ENCODE measurements at regions of chr17 and their contacts with region 1.

Region 1: DNA sequence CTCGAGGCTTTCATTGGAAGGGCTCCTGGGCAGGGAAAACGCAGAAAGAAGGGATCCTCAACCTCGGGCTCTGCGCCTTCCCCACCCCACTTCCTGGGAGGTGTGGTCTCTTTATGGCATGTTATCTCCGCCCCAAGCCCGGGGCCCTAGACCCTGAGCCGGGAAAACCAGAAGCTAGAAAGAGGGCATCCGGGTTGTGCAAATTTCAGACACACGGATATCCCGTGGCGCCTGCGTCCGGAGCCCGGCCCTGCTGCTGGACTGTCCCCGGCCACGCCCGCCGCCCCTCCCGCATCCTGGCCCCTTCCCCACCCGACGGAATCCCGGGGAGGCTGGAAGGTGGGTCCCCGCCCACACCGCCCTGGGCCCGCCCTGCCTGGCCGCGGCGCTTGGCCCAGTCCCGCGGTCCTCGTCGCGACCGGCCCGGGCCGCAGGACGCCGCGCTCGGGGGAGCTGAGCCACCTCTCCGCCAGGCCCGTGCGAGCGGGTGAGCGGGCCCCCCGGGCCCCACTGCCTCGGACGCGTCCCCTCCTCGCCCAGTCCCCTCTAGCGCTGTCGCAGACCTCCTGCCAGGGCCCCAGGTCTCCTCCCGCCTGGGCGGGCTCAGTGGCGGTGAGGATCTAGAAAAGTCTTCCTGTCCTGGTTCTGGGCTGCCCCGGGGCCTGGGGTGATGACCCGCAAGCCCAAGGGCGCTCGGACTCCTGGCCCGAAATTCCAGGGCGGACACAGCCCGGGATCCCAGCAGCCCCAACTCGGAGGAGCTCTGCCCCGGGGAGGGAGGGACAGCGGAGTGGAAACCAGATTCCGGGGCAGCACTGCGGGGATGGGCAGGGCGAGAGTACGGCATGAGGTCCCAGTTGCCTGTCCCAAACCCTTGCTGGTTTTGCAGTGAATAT is at the start of gene SLC16A5:
- DNase-seq: peak; percentile 75 to 95
- H3K4me3 ChIP-seq: peak within 1 kb of the TSS; percentile 73 to 82 (median 77)
- H3K27ac ChIP-seq: peak within 1 kb of the TSS; percentile 71
- H3K4me1 ChIP-seq: peaks cover 3 to 33% (median 26%) of the 10 kb centered on the region in 4 experiments
- H3K27me3 ChIP-seq: no peaks in the 10 kb centered on the region
- CTCF ChIP-seq: no peak
- EP300 ChIP-seq: no peak
- POLR2A ChIP-seq: peak in 1 of 2 experiments; percentile 75; a peak in 2 of 3 replicates
- RAD21 ChIP-seq: 0 out of 4 replicates have a peak, but pooled peaks of 1 of the 2 experiments have one; percentile 3
- total RNA-seq, gene SLC16A5: 16.6 and 17.1 TPM in 2 replicates

Region 2: GRCh38 chr17:75001915-75002843 is 85.6 kb before region 1 on chr17:
- CTCF ChIA-PET with region 1: no interaction called
- POLR2A ChIA-PET with region 1: no interaction called
- DNase-seq: no peak
- H3K4me3 ChIP-seq: no peak overlapping the region
- H3K27ac ChIP-seq: no peak overlapping the region
- H3K4me1 ChIP-seq: no peaks in the 10 kb centered on the region
- H3K27me3 ChIP-seq: no peaks in the 10 kb centered on the region
- CTCF ChIP-seq: no peak
- EP300 ChIP-seq: no peak
- POLR2A ChIP-seq: no peak
- RAD21 ChIP-seq: no peak

Region 3: DNA sequence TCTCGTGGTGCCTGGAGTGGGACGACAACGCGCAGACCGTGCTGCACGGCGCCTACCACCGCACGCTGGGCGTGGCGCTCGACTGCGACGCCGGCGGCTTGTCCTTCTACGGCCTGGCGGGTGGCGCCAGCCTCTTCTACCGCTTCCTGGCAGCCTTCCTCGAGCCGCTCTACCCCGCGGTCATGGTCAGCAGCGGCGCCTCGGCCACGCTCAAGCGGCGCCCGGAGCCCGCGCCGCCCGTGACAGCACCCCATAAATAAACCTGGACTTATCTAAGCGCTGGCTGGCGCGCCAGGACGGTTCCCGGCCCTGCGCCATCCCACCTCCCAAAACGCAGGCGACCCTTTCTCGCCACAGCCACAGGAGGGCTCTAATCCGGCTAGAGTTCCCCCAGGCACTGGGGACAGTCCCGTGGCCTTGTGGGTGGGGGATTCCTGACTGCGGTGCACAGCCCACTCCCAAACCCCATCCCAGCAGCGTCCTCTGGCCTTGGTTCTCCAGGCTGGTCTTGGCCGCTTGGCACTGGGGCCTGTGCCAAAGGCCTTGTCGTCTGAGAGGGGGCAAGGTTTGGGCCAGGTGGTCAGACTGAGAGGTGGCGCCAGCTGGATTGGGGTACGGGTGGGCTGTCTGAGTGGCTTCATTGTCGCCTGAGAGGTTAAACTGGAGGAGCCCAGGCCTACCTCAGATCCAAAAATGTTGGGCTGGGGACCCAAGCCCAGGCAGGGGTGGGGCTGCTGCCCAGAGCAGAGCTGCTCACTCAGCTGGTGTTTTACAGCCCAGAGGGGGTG is 10.1 kb before region 1 on chr17:
- CTCF ChIA-PET with region 1: interaction called, 5 read pairs
- POLR2A ChIA-PET with region 1: interaction called, 13 read pairs
- DNase-seq: no peak
- H3K4me3 ChIP-seq: peak overlapping the region in 1 of 4 experiments; percentile 6; a peak in 1 of 8 replicates
- H3K27ac ChIP-seq: no peak overlapping the region
- H3K4me1 ChIP-seq: peaks cover 0 to 16% (median 8%) of the 10 kb centered on the region in 4 experiments; a peak in 6 of 7 replicates
- H3K27me3 ChIP-seq: no peaks in the 10 kb centered on the region
- CTCF ChIP-seq: peak in 2 of 3 experiments; percentile 4; a peak in 1 of 4 replicates
- EP300 ChIP-seq: no peak
- POLR2A ChIP-seq: no peak
- RAD21 ChIP-seq: no peak; a peak in 1 of 4 replicates

Region 4: DNA sequence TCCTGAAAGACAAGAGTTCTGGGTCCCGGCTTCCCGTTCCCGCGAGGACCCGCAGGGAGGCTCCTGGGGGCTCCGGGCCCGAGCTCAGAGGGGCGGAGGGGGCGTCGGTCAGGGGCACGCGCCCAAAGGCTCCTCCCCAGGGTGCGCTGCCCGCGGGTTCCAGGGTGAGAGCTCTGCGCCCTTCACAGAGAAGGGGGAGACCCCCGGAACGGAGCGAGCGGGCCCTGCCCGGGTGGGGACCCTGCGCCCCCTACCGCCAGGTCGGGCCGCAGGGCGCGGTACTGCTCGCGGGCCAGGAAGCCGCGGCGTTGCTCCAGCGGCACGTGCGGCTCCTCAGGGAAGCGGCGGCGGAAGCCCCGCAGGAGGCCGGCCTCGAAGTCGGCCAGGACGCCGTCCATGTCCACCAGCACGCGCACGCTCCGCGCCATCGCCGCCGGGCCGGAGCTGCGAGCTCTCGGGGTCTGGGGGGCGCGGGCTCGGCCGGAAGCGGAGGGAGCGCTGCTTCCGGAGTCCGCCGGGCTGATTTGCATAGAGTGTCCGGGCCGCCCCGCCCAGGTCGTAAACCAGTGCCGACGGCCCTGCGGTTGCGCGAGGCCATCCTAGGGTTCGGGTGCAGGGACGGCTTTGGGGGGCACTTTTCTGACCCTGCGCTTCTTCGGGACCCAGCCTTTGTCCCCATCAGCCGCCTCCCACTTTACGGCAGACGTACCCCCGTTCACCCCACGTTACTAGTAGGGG is 43.6 kb after region 1 on chr17 and contains the start of gene NT5C:
- CTCF ChIA-PET with region 1: interaction called, 4 read pairs
- POLR2A ChIA-PET with region 1: interaction called, 11 read pairs
- DNase-seq: peak; percentile 58 to 91
- H3K4me3 ChIP-seq: peak within 1 kb of the TSS; percentile 69 to 95 (median 74)
- H3K27ac ChIP-seq: peak within 1 kb of the TSS; percentile 81
- H3K4me1 ChIP-seq: peaks cover 0 to 5% (median 4%) of the 10 kb centered on the region in 4 experiments; a peak in 5 of 7 replicates
- H3K27me3 ChIP-seq: no peaks in the 10 kb centered on the region
- CTCF ChIP-seq: peak; percentile 65 to 72 (median 68)
- EP300 ChIP-seq: no peak
- POLR2A ChIP-seq: peak; percentile 72 to 75; a peak in 2 of 3 replicates
- RAD21 ChIP-seq: peak; percentile 32 to 42; a peak in 2 of 4 replicates
- total RNA-seq, gene NT5C: 52.1 and 66.9 TPM in 2 replicates